Activated CD4-positive, alpha-beta T cell treated with anti-CD3 and anti-CD28 coated beads, Interleukin-2, amount 10 ng/mL, durations not matched to agents 24 days and 14 days (primary cell): ENCODE measurements at regions of chr11 and their contacts with region 1.

Region 1: GRCh38 chr11:119057000-119057769 is at the start of gene HYOU1:
- DNase-seq: peak; percentile 99
- H3K4me3 Mint-ChIP-seq: peak within 1 kb of the TSS; percentile 95
- H3K27ac Mint-ChIP-seq: peak within 1 kb of the TSS; percentile 98
- H3K4me1 Mint-ChIP-seq: peaks cover 36% of the 10 kb centered on the region
- H3K27me3 Mint-ChIP-seq: no peaks in the 10 kb centered on the region
- total RNA-seq, gene HYOU1: 193 and 203 TPM in 2 replicates

Region 2: DNA sequence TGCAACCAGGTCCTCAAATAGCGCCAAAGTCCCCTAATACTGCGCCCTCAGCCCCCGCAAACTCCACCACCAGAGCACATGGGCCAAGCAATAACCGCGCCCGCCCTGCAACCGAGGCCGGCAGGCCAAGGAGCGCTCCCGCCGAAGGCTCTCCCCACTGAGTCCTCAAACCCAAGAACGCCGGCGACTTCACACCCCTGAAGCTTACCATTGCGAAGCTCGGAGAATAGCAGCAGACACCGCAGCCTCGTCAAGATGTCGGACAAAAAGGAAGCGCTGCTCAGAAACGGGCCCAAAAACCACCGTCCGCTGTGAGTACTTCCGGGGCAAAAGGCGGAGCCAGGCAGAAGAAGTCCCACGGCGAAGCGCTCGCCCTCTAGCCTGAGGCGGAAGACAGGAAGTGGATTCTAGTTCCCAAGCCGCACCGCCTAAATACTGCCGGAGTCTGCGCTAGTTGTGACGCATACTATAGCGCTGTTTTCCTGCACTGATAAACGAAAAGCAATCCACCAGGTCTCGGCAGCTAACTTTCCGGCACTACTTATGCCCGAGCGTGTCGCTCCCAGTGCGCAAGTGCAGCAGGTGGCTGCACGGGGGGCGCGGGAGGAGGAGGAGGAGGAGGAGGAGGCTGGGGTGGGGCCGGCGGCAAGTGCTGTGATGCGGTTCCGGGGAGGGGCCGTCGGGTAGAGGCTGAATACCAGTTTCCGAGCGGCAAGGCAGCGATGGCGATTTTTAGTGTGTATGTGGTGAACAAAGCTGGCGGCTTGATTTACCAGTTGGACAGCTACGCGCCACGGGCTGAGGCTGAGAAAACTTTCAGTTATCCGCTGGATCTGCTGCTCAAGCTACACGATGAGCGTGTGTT is 38.9 kb before region 1 on chr11 and contains the starts of genes RPS25 and TRAPPC4:
- intact Hi-C with region 1: loop called (anchors 1 kb)
- DNase-seq: peak; percentile 98
- H3K4me3 Mint-ChIP-seq: peak within 1 kb of the TSS; percentile 100
- H3K27ac Mint-ChIP-seq: peak within 1 kb of the TSS; percentile 99
- H3K4me1 Mint-ChIP-seq: peaks cover 35% of the 10 kb centered on the region
- H3K27me3 Mint-ChIP-seq: no peaks in the 10 kb centered on the region
- total RNA-seq, gene RPS25: 1,641 and 1,650 TPM in 2 replicates
- total RNA-seq, gene TRAPPC4: 141 and 151 TPM in 2 replicates

Region 3: DNA sequence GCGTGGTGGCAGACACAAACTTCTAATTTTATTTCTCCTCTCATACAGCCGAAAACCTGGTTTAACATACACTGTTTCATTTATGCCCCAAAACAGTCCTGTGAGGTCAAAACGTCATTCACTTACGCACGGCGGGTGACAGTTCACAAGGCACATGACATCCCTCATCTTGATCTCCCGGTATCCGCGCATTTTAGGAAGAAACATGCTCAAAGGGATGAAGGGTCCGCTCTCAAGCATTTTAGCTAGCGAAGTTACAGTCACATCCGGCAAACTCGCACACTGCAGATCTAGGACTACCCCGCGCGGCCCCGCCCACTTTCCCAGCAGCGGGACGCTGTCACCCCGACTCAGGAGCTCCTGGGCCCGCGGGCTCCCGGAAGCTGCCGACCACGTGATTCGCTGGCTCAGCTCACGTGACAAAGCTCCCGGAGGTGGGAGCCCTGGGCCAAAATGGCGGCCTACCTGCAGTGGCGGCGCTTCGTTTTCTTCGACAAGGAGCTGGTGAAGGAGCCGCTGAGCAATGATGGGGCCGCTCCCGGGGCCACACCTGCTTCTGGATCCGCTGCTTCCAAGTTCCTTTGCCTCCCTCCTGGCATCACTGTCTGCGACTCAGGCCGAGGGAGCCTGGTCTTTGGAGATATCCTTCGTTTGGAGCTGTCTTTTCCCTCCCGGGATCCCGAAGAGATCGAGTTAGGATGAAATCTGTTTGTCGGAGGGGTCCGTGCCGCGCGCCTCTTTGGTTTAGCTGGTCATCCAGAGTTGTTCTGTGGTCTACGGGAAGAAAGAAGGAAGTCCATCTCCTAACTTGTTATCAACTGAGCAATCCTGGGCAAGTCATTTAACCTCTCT is 10.4 kb after region 1 on chr11 and contains the start of gene VPS11:
- intact Hi-C with region 1: loop called (anchors 1 kb)
- DNase-seq: peak; percentile 99
- H3K4me3 Mint-ChIP-seq: peak within 1 kb of the TSS; percentile 92
- H3K27ac Mint-ChIP-seq: peak within 1 kb of the TSS; percentile 93
- H3K4me1 Mint-ChIP-seq: peaks cover 22% of the 10 kb centered on the region
- H3K27me3 Mint-ChIP-seq: no peaks in the 10 kb centered on the region
- total RNA-seq, gene VPS11: 20.2 and 20.9 TPM in 2 replicates

Region 4: DNA sequence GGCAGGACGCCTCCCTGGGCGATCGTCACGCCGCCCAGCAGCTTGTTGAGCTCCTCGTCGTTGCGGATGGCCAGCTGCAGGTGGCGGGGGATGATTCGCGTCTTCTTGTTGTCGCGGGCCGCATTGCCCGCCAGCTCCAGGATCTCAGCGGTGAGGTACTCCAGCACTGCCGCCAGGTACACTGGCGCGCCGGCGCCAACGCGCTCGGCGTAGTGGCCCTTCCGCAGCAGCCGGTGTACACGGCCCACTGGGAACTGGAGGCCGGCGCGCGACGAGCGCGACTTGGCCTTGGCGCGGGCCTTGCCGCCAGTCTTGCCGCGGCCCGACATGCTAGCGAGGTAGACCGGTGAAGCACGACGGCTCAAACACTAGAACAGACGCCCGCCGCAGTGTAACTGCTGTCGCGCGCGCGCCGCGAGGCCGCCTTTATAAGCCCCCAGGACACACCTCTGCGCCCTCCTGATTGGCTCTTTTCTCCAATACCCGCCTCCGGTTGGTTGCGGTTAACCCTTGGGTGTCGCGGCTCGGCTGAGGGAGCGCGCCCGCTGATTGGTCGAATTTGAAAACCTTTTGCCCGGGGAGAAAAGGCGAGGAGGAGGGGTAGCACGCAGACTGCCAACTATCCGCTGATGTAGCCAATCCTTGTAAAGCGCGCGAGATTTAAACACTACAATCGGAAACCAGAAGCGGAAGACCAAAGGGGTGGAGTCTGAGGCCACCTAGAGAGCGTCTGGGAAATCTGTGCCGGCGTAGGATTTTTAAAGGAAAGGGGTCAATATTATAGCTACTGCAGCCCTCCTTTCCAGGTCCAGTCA is 38.1 kb after region 1 on chr11:
- intact Hi-C with region 1: loop called (anchors 1 kb)
- DNase-seq: peak; percentile 100
- H3K4me3 Mint-ChIP-seq: peak overlapping the region; percentile 95
- H3K27ac Mint-ChIP-seq: peak overlapping the region; percentile 92
- H3K4me1 Mint-ChIP-seq: peaks cover 60% of the 10 kb centered on the region
- H3K27me3 Mint-ChIP-seq: peaks cover 2% of the 10 kb centered on the region

Region 5: GRCh38 chr11:119121008-119121810 is 64.0 kb after region 1 on chr11 and contains the start of gene HINFP:
- intact Hi-C with region 1: loop called (anchors 1 kb)
- DNase-seq: peak; percentile 100
- H3K4me3 Mint-ChIP-seq: peak within 1 kb of the TSS; percentile 98
- H3K27ac Mint-ChIP-seq: peak within 1 kb of the TSS; percentile 89
- H3K4me1 Mint-ChIP-seq: peaks cover 26% of the 10 kb centered on the region
- H3K27me3 Mint-ChIP-seq: no peaks in the 10 kb centered on the region
- total RNA-seq, gene HINFP: 34.9 and 41.4 TPM in 2 replicates

Region 6: GRCh38 chr11:119236490-119236889 is 179.3 kb after region 1 on chr11:
- intact Hi-C with region 1: no loop called
- DNase-seq: no peak
- H3K4me3 Mint-ChIP-seq: no peak overlapping the region
- H3K27ac Mint-ChIP-seq: peak overlapping the region; percentile 94
- H3K4me1 Mint-ChIP-seq: peaks cover 39% of the 10 kb centered on the region
- H3K27me3 Mint-ChIP-seq: no peaks in the 10 kb centered on the region